PC-3 (cell line): ENCODE measurements at regions of chr12 and their contacts with region 1.

Region 1: GRCh38 chr12:50734409-50735263 is 29.3 kb upstream of the ATF1 start:
- DNase-seq: peak; percentile 63
- ATAC-seq: peak; percentile 12; the same call in 1 of the 2 replicates
- H3K4me3 ChIP-seq: no peak overlapping the region
- H3K27ac ChIP-seq: no peak overlapping the region
- H3K4me1 ChIP-seq: peaks cover 17% of the 10 kb centered on the region
- H3K27me3 ChIP-seq: no peaks in the 10 kb centered on the region
- CTCF ChIP-seq: peak; percentile 81

Region 2: GRCh38 chr12:50467439-50467838 is 267.2 kb before region 1 on chr12:
- CTCF ChIA-PET with region 1: interaction called, 10 read pairs
- POLR2A ChIA-PET with region 1: no interaction called
- intact Hi-C with region 1: no loop called
- DNase-seq: no peak
- ATAC-seq: no peak
- H3K4me3 ChIP-seq: no peak overlapping the region
- H3K27ac ChIP-seq: no peak overlapping the region
- H3K4me1 ChIP-seq: no peaks in the 10 kb centered on the region
- H3K27me3 ChIP-seq: no peaks in the 10 kb centered on the region
- CTCF ChIP-seq: no peak

Region 3: DNA sequence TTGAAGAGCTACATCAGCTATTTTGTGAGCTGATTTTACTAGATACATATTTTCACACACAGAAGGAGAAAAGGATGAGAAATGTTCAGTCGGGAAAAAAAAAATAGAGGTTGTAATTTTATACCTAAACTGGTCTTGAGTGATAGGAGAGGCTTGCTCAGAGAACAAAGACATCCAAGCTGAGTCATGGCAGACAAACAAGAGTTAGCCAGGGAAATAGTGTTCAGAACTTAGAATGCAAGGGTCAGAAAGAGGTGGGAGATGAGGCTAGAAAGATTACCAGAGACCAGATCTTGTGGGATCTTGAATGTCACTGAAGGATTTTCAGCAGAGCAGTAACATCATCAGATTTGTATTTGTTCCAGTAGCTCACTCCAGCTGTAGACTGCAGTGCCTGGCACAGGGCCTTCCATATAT is 92.6 kb before region 1 on chr12:
- CTCF ChIA-PET with region 1: no interaction called
- POLR2A ChIA-PET with region 1: no interaction called
- intact Hi-C with region 1: no loop called
- DNase-seq: peak; percentile 79
- ATAC-seq: peak; percentile 72
- H3K4me3 ChIP-seq: peak overlapping the region; percentile 2; the same call in 1 of the 2 replicates
- H3K27ac ChIP-seq: peak overlapping the region; percentile 78
- H3K4me1 ChIP-seq: peaks cover 59% of the 10 kb centered on the region
- H3K27me3 ChIP-seq: no peaks in the 10 kb centered on the region
- CTCF ChIP-seq: no peak

Region 4: DNA sequence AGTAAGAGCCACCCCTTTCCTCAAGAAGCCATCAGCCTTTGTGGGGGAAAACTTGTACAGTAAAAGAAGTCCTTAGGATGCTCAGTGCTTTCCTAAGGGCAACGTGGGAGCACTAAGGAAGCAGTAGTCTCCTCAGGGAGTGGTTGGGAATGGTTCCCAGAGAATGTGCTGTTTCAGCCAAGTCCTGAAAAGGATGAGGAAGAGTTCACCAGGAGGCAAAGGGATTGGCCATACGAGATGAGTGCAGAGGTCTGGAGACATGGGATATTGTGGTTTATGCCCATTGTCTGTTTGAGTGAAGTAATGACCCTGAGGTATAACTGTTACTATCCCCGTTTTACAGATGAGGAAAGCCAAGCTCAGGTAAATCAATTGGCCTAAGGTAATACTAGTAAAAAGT is 56.8 kb before region 1 on chr12:
- CTCF ChIA-PET with region 1: no interaction called
- POLR2A ChIA-PET with region 1: no interaction called
- intact Hi-C with region 1: no loop called
- DNase-seq: peak; percentile 93
- ATAC-seq: peak; percentile 75
- H3K4me3 ChIP-seq: no peak overlapping the region
- H3K27ac ChIP-seq: peak overlapping the region; percentile 88
- H3K4me1 ChIP-seq: peaks cover 67% of the 10 kb centered on the region
- H3K27me3 ChIP-seq: no peaks in the 10 kb centered on the region
- CTCF ChIP-seq: no peak